Activated CD4-positive, alpha-beta memory T cell treated with anti-CD3 and anti-CD28 coated beads for 36 hours (primary cell): ENCODE measurements at regions of chr4 and their contacts with region 1.

Region 1: GRCh38 chr4:140861359-140862176 is 105.4 kb upstream of the TBC1D9 start:
- DNase-seq: peak; percentile 49
- H3K4me3 Mint-ChIP-seq: no peak overlapping the region
- H3K27ac Mint-ChIP-seq: no peak overlapping the region
- H3K4me1 Mint-ChIP-seq: peaks cover 7% of the 10 kb centered on the region
- H3K27me3 Mint-ChIP-seq: peaks cover 8% of the 10 kb centered on the region

Region 2: DNA sequence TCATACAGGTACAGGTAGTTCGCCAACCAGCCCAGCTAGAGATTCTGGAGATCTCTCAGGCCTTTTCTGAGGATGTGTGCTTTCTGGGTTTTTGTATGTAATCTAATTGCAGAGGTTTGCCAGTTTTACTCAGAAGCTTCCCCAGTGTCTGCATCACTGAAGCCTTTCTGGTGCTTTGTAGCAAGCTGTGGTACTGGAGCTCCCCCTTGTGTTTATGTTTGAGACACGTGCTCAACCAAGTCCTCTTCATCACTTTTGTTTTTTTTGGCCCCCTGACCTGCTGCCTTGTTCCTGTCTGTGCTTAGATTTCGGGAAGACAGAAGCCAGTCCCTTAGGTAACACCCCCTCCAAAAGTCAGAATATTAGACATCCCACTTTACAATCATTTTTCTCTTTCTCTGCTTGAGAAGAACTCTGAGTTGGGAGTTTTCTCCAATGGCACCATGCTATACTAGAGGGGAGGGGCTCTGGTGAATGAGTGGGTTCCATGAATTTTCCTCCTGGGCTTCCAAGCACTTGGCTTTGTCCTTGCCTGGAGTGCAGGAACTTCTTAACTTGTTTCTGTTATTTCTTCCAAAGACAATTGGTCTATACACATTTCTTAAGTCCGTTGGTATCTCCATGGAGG is 23.0 kb after region 1 on chr4:
- CTCF ChIA-PET with region 1: interaction called, 14 read pairs
- POLR2A ChIA-PET with region 1: no interaction called
- intact Hi-C with region 1: no loop called
- DNase-seq: peak; percentile 19
- H3K4me3 Mint-ChIP-seq: no peak overlapping the region
- H3K27ac Mint-ChIP-seq: no peak overlapping the region
- H3K4me1 Mint-ChIP-seq: no peaks in the 10 kb centered on the region
- H3K27me3 Mint-ChIP-seq: peaks cover 7% of the 10 kb centered on the region

Region 3: GRCh38 chr4:141133146-141133998 is 271.8 kb after region 1 on chr4 and contains the start of gene RNF150:
- CTCF ChIA-PET with region 1: interaction called, 9 read pairs
- POLR2A ChIA-PET with region 1: no interaction called
- intact Hi-C with region 1: loop called (anchors 1 kb)
- DNase-seq: peak; percentile 68
- H3K4me3 Mint-ChIP-seq: peak within 1 kb of the TSS; percentile 72
- H3K27ac Mint-ChIP-seq: no peak within 1 kb of the TSS
- H3K4me1 Mint-ChIP-seq: peaks cover 11% of the 10 kb centered on the region
- H3K27me3 Mint-ChIP-seq: peaks cover 63% of the 10 kb centered on the region
- total RNA-seq, gene RNF150: not detected

Region 4: DNA sequence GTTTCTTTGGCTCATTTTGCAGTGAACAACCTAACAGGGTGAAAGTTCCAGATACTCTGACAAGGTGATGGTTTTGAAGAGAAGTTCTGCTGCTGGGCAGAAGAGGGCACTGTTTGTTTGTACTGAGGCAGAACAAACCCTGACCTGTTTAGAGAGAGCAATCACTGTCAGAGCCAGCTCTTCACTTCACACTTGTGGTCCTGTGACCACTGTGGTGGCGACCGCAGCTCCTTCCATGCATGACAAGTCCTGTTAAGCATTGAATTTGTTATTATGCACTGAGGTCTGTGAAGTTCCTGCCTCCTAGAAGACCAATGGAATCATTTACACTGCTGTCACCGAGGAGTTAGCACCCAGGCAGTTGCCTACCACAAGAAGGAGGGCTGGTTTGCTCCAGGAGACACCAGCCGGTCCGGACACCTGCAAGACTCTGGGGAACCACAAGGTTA is 445.7 kb after region 1 on chr4:
- CTCF ChIA-PET with region 1: no interaction called
- POLR2A ChIA-PET with region 1: no interaction called
- intact Hi-C with region 1: loop called (anchors 5 kb)
- DNase-seq: peak; percentile 84
- H3K4me3 Mint-ChIP-seq: no peak overlapping the region
- H3K27ac Mint-ChIP-seq: no peak overlapping the region
- H3K4me1 Mint-ChIP-seq: peaks cover 3% of the 10 kb centered on the region
- H3K27me3 Mint-ChIP-seq: peaks cover 3% of the 10 kb centered on the region

Region 5: DNA sequence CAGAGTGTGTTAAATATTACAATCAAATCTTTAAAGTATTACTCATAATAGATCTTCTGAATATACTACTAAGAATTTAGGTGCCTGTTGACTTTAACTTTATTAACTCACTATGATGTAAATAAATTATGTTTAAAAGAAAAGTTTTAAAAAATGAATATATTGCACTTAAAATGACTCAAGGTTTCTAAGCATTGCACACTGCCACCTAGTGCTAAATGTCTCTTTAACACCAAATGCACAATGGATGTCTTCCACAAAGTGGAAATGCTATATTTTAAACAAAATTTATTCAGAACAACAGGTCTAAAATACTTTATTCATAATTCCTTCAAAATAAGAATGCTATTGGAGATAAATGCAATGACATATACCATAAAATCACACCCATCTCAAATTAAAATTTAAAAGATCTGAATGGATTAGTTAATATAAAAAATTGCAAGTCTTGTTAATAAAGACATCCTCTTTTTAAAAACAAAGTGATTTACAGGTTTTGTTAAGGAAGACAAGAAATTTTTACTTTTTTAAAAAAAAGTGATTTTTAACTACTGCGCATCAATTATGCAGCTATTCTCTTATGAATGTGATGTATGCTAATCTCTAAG is 1979.1 kb after region 1 on chr4:
- CTCF ChIA-PET with region 1: no interaction called
- POLR2A ChIA-PET with region 1: no interaction called
- intact Hi-C with region 1: loop called (anchors 5 kb)
- DNase-seq: no peak
- H3K4me3 Mint-ChIP-seq: no peak overlapping the region
- H3K27ac Mint-ChIP-seq: no peak overlapping the region
- H3K4me1 Mint-ChIP-seq: peaks cover 21% of the 10 kb centered on the region
- H3K27me3 Mint-ChIP-seq: peaks cover 2% of the 10 kb centered on the region